Panc1 (cell line): ENCODE measurements at regions of chr5 and their contacts with region 1.

Region 1: GRCh38 chr5:38922199-38922598 is 76.4 kb downstream of the OSMR start:
- DNase-seq: peak; percentile 45
- ATAC-seq: peak; percentile 95
- H3K4me3 ChIP-seq: no peak overlapping the region
- H3K27ac ChIP-seq: no peak overlapping the region
- H3K4me1 ChIP-seq: no peaks in the 10 kb centered on the region
- H3K27me3 ChIP-seq: no peaks in the 10 kb centered on the region
- CTCF ChIP-seq: peak; percentile 93

Region 2: DNA sequence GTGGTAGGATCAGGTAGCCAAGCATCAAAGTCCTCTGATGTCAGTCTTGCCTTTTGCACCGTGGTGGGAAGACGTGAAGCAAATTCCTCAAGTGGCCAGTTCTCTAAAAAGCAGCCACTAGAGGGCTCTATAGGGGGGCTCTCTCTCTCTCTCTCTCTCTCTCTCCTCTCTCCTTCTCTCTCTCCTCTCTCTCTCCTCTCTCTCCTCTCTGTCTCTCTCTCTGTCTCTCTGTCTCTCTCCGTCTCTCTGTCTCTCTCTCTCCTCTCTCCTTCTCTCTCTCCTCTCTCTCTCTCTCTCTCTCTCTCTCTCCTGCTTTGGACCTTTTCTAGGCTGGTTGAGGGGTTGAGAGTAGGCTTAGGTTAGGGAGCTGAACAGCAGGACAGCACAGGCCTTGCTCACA is 90.3 kb before region 1 on chr5:
- CTCF ChIA-PET with region 1: no interaction called
- POLR2A ChIA-PET with region 1: no interaction called
- in situ Hi-C with region 1: no loop called
- intact Hi-C with region 1: loop called (anchors 5 kb)
- DNase-seq: no peak
- ATAC-seq: peak; percentile 67
- H3K4me3 ChIP-seq: no peak overlapping the region
- H3K27ac ChIP-seq: no peak overlapping the region
- H3K4me1 ChIP-seq: 0 out of 2 replicates have a peak, but pooled peaks cover 4% of the 10 kb centered on the region
- H3K27me3 ChIP-seq: no peaks in the 10 kb centered on the region
- CTCF ChIP-seq: peak; percentile 61